Ovary (tissue), 10 donors: ENCODE measurements at regions of chr11 and their contacts with region 1.

Region 1: GRCh38 chr11:249062-249461 is 12.3 kb downstream of the PSMD13 start:
- DNase-seq: no peak
- H3K4me3 ChIP-seq: no peak overlapping the region
- H3K27ac ChIP-seq: no peak overlapping the region
- H3K4me1 ChIP-seq: no peaks in the 10 kb centered on the region
- H3K27me3 ChIP-seq: no peaks in the 10 kb centered on the region
- CTCF ChIP-seq: no peak
- EP300 ChIP-seq: no peak
- POLR2A ChIP-seq: no peak

Region 2: GRCh38 chr11:279966-280582 is 31.0 kb after region 1 on chr11:
- intact Hi-C with region 1: loop called in 1 of 4 experiments (anchors 5 kb)
- DNase-seq: peak in 2 of 5 donors; percentile 11 to 42
- H3K4me3 ChIP-seq: no peak overlapping the region
- H3K27ac ChIP-seq: no peak overlapping the region
- H3K4me1 ChIP-seq: peaks cover 3% of the 10 kb centered on the region
- H3K27me3 ChIP-seq: peaks cover 5% of the 10 kb centered on the region
- CTCF ChIP-seq: no peak
- EP300 ChIP-seq: no peak
- POLR2A ChIP-seq: no peak